ENCODE measurements at regions of chr16 and their contacts with region 1.

Region 1: DNA sequence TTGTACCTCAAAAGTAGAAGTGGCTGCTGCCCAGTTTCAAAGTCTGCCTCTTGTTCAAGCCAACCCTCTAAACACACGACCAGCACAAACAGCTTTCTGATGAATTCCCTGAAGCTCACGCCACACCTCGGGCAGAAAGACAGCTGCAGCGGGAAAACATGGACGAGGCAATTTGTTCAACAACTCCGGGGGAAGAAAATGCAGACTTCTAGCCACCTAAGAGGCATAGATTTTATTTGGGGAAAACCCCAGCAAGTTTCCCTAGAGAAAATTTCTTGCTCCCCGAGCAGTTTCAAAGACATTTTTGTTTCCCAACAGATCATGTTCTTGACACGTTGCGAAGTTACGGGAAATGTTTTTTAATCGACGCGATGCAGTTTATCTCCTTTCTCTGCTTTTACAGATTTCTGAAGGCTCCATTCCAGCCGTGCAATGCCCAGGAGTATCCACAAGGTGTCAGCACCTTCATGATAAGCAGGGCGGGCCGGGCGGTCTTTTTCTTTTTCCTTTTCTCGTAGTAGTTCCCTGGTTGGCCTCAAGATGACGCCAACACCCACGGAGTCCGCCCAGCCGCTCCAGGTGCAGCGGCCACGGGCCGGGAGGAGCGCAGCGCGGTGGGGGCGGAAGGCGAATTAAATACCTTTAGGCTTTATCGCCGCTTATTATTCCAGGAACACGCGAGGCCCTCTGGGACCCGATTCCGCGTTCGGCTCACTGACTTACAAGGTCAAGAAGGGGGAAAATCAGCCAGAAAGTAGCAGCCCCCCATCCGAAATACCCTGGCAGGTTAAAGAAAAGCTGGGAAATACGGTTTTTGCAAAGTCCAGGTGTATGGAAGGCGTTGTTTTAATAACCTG is 2.9 kb upstream of the FOXC2 start:
- DNase-seq: peak; percentile 88 to 92
- H3K4me3 ChIP-seq: peak overlapping the region; percentile 17; the same call in 1 of the 2 replicates
- H3K4me3 Mint-ChIP-seq: peak overlapping the region; percentile 69
- H3K27ac Mint-ChIP-seq: no peak overlapping the region
- H3K4me1 ChIP-seq: no peaks in the 10 kb centered on the region
- H3K4me1 Mint-ChIP-seq: peaks cover 6% of the 10 kb centered on the region
- H3K27me3 ChIP-seq: no peaks in the 10 kb centered on the region
- H3K27me3 Mint-ChIP-seq: peaks cover 10% of the 10 kb centered on the region
- CTCF ChIP-seq: peak; percentile 100

Region 2: DNA sequence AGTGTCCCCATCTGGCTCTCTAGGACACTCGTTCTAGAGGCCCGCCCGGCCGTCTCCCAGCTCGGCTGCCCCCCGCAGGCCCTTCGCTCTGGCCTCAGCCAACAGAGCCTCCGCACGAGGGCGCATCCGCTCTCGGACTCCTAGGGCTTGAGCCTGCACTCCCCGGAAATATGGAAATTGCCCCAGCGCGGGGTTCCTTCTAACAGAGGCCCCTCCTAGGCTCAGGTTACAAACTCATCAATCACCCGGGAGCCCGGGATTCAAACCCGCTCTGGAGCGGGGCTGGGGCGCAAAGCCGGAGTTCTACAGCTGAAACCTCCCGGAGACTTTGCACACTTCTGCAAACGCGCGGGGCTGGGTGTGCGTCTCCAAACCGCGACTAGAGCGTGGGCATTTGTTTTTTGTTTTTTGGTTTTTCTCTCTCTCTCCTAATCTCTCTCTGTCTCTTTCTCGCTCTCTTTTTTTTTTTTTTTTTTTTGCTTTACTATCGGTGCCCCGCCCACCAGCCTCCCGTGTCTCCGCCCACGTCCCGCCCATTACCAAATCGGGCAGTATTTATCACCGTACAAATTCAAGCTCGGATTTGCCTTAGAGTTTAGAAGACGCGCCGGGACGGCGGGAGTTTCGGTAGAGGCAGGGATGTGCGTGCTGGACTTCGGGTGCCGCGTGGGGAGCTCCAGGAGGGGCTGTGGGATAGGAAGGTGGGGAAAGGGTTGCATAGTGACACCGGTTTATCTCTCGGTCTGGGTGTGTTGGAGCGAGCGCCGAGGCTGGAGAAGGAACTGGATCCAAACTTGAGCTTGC is 12.2 kb after region 1 on chr16:
- CTCF ChIA-PET with region 1: interaction called, 11 read pairs
- POLR2A ChIA-PET with region 1: no interaction called
- intact Hi-C with region 1: no loop called
- DNase-seq: peak; percentile 92 to 93
- H3K4me3 ChIP-seq: peak overlapping the region; percentile 49
- H3K4me3 Mint-ChIP-seq: peak overlapping the region; percentile 98
- H3K27ac Mint-ChIP-seq: peak overlapping the region; percentile 85
- H3K4me1 ChIP-seq: peaks cover 12% of the 10 kb centered on the region; the same call in 1 of the 2 replicates
- H3K4me1 Mint-ChIP-seq: peaks cover 12% of the 10 kb centered on the region
- H3K27me3 ChIP-seq: no peaks in the 10 kb centered on the region
- H3K27me3 Mint-ChIP-seq: peaks cover 18% of the 10 kb centered on the region
- CTCF ChIP-seq: peak; percentile 63 to 95

Region 3: GRCh38 chr16:86834451-86835035 is 270.8 kb after region 1 on chr16:
- CTCF ChIA-PET with region 1: no interaction called
- POLR2A ChIA-PET with region 1: no interaction called
- intact Hi-C with region 1: loop called (anchors 1 kb)
- DNase-seq: peak in 1 of 2 experiments; percentile 17
- H3K4me3 ChIP-seq: no peak overlapping the region
- H3K4me3 Mint-ChIP-seq: no peak overlapping the region
- H3K27ac Mint-ChIP-seq: no peak overlapping the region
- H3K4me1 ChIP-seq: no peaks in the 10 kb centered on the region
- H3K4me1 Mint-ChIP-seq: no peaks in the 10 kb centered on the region
- H3K27me3 ChIP-seq: no peaks in the 10 kb centered on the region; the same call in 1 of the 2 replicates
- H3K27me3 Mint-ChIP-seq: peaks cover 10% of the 10 kb centered on the region
- CTCF ChIP-seq: peak in 1 of 2 experiments; percentile 10

Region 4: GRCh38 chr16:87062569-87063442 is 499.1 kb after region 1 on chr16:
- CTCF ChIA-PET with region 1: interaction called, 35 read pairs
- POLR2A ChIA-PET with region 1: no interaction called
- intact Hi-C with region 1: loop called (anchors 1 kb)
- DNase-seq: peak; percentile 65 to 80
- H3K4me3 ChIP-seq: no peak overlapping the region
- H3K4me3 Mint-ChIP-seq: no peak overlapping the region
- H3K27ac Mint-ChIP-seq: no peak overlapping the region
- H3K4me1 ChIP-seq: no peaks in the 10 kb centered on the region
- H3K4me1 Mint-ChIP-seq: no peaks in the 10 kb centered on the region
- H3K27me3 ChIP-seq: no peaks in the 10 kb centered on the region
- H3K27me3 Mint-ChIP-seq: peaks cover 26% of the 10 kb centered on the region
- CTCF ChIP-seq: peak; percentile 90 to 92

Region 5: GRCh38 chr16:87278191-87279095 is 714.7 kb after region 1 on chr16:
- CTCF ChIA-PET with region 1: interaction called, 7 read pairs
- POLR2A ChIA-PET with region 1: no interaction called
- intact Hi-C with region 1: loop called (anchors 1 kb)
- DNase-seq: peak; percentile 79 to 86
- H3K4me3 ChIP-seq: no peak overlapping the region
- H3K4me3 Mint-ChIP-seq: no peak overlapping the region
- H3K27ac Mint-ChIP-seq: no peak overlapping the region
- H3K4me1 ChIP-seq: 0 out of 2 replicates have a peak, but pooled peaks cover 4% of the 10 kb centered on the region
- H3K4me1 Mint-ChIP-seq: no peaks in the 10 kb centered on the region
- H3K27me3 ChIP-seq: no peaks in the 10 kb centered on the region; the same call in 1 of the 2 replicates
- H3K27me3 Mint-ChIP-seq: peaks cover 25% of the 10 kb centered on the region
- CTCF ChIP-seq: peak; percentile 95 to 98

Region 6: DNA sequence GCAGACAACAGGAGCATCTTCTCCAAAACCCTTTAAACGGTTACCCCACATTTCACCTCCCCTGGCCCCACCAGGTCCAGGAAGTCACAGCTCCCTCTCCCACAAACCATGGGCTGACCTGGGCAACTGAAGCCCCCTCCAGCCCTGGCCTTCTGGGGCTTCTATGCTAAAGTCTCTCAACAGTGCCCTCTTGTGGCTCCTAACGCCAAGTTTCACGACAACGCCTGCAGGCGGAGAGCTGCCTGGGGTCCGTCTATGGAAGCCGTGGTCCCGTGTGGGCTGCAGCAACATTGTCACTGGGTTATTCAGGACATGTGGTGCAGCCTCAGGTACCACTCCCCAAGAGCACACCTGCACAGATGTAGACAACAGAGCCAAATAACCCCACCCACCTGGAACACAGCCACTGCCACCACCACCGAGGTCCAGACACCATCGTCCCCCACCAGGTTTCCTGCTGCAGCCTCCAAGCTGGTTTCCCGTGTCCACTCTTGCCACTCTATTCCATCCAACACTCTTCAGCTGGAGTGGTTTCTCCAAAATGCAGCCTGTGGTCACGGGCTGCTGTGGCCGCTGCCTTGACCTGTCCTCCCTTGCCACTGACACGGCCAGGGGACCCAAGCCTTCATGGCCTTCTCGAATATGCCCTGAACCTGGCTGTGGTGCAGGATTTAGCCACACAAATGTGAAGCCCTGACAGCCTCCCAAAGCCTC is 734.4 kb after region 1 on chr16:
- CTCF ChIA-PET with region 1: no interaction called
- POLR2A ChIA-PET with region 1: no interaction called
- intact Hi-C with region 1: loop called (anchors 5 kb)
- DNase-seq: peak in 1 of 2 experiments; percentile 43
- H3K4me3 ChIP-seq: no peak overlapping the region
- H3K4me3 Mint-ChIP-seq: no peak overlapping the region
- H3K27ac Mint-ChIP-seq: no peak overlapping the region
- H3K4me1 ChIP-seq: peaks cover 8% of the 10 kb centered on the region; the same call in 1 of the 2 replicates
- H3K4me1 Mint-ChIP-seq: no peaks in the 10 kb centered on the region
- H3K27me3 ChIP-seq: no peaks in the 10 kb centered on the region
- H3K27me3 Mint-ChIP-seq: no peaks in the 10 kb centered on the region
- CTCF ChIP-seq: peak; percentile 45 to 56

Measured in Caco-2 (cell line).